Kidney (tissue), 22 donors: ENCODE measurements at regions of chr10 and their contacts with region 1.

Region 1: GRCh38 chr10:118568327-118568848 is 27.1 kb downstream of the PRLHR start:
- DNase-seq: peak in 3 of 5 donors; percentile 58 to 88 (median 81)
- H3K4me3 ChIP-seq: peak overlapping the region in 1 of 3 donors; percentile 8
- H3K27ac ChIP-seq: no peak overlapping the region
- H3K4me1 ChIP-seq: no peaks in the 10 kb centered on the region
- H3K27me3 ChIP-seq: no peaks in the 10 kb centered on the region
- CTCF ChIP-seq: peak; percentile 86

Region 2: DNA sequence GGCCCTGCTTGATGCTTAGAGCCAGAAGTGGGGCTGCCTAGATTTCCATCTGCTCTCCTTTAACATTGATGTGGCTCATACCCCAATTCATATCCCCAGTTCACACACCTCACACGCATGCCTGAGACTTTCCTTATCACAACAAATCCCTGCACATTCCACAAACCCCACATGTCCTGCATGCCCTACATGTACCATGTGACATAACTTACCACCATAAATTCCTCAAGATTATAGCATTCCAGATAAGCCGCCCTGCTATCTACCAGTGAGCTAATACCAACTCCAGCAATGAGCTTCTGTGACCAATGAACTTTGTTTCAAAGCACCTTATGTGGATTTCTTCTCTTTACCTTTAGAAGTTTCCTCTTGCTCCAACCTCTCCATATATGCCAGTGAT is 416.9 kb before region 1 on chr10:
- intact Hi-C with region 1: no loop called
- DNase-seq: no peak
- H3K4me3 ChIP-seq: no peak overlapping the region
- H3K27ac ChIP-seq: no peak overlapping the region
- H3K4me1 ChIP-seq: peaks cover 0 to 6% (median 0%) of the 10 kb centered on the region in 3 donors
- H3K27me3 ChIP-seq: no peaks in the 10 kb centered on the region
- CTCF ChIP-seq: no peak

Region 3: DNA sequence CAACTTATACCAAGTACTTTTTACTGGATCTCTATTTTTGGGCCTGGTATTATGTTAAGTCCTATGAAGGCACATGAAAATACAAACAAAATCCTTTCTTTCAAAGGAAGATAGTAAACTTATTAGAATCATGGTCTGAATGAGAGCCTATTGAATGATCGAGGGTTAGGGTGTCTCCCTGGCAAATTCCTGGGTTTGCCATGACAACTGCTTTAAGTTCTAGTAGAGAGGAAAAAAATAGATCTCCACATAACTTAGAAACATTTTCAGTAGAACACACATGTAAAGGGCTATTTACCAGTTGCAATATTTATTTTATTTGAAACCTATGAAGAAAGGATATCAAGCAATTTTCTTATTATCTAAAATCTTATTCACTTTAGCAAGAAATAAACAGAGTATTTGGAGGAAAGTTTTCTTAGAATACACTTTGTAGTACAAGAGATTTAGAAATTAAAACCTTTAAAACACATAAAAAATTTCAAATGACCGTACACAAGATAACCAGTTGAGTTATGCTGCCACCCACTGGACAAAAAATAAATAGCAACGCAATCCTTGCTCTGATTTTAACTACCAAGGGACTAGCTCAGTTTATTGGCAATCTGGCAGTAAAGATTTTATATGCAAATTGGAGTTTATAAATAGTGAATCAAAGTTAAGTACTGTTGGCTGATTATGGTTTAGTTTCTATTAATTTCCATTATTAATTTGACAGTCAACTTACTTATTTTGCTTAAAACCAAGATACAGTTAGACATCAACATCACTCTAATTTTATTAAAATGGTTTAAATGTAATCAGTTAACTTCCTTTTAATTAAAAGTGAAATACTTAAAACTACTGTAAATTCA is 152.5 kb after region 1 on chr10:
- intact Hi-C with region 1: loop called (anchors 5 kb)
- DNase-seq: peak in 3 of 5 donors; percentile 58 to 75 (median 73)
- H3K4me3 ChIP-seq: no peak overlapping the region
- H3K27ac ChIP-seq: no peak overlapping the region
- H3K4me1 ChIP-seq: peaks cover 0 to under 1% (median 0%) of the 10 kb centered on the region in 3 donors
- H3K27me3 ChIP-seq: no peaks in the 10 kb centered on the region
- CTCF ChIP-seq: peak; percentile 69

Region 4: DNA sequence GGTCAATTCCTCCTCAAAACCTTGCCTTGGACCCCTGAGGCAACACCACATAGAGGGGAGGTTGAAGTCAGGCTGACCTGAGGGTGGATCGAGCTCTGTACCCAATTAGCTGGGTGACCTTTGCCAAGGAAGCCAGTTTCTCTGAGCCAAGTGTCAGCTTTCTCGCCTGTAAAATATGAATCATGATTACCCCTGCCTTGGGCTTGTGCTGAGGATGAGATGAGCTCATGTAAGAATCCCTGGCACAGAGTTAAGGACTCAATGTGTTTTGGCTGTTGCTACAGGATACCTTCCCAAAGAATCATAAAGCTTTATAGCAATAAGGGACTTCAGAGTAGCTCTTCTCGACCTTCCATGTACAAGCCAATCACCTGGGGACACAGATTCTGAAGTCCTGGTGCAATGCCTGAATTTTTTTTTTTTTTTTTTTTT is 229.9 kb after region 1 on chr10:
- intact Hi-C with region 1: loop called (anchors 10 kb)
- DNase-seq: no peak
- H3K4me3 ChIP-seq: no peak overlapping the region
- H3K27ac ChIP-seq: no peak overlapping the region
- H3K4me1 ChIP-seq: no peaks in the 10 kb centered on the region
- H3K27me3 ChIP-seq: no peaks in the 10 kb centered on the region
- CTCF ChIP-seq: no peak